ENCODE measurements at regions of chr6 and their contacts with region 1.

Region 1: DNA sequence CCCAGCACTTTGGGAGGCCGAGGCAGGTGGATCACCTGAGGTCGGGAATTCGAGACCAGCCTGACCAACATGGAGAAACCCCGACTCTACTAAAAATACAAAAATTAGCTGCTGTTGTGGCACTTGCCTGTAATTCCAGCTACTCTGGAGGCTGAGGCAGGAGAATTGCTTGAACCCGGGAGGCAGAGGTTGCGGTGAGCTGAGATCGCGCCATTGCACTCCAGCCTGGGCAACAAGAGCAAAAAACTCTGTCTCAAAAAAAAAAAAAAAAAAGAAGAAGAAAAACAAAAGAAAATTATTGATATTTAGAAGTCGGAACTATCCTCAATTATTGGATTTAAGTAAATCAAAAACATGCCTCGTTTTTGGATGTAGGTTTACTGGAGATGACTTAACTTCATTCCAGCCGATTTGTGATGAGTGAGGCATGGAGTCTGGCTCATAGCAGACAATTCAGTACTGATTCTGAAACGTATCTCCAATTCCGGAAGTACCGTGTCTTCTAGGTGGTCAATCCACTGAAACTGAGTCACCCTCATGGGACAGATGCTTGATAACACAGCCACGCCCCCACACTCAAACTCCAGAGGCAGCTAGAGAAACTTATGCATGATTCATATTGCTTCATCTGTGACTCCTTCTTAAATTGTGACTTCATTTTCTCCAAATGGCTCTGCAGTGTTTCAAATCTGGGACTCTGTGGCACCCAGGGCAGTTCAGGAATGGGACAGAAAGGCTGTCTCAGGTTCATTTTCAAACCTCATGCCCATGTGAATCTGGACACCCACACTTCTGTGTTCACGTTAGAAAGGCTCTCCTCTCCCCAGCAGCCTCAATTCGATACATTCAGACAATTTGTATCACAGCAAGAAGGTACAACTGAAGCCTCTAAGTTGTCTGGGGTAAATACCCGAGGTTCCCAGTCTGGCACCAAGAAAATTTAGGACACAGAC is 110.4 kb upstream of the ARMC2 start:
- DNase-seq: peak; percentile 90
- ATAC-seq: peak; percentile 31
- H3K4me3 ChIP-seq: no peak overlapping the region; the same call in 1 of the 2 replicates
- H3K27ac ChIP-seq: peak overlapping the region; percentile 86
- H3K4me1 ChIP-seq: peaks cover 79% of the 10 kb centered on the region
- H3K27me3 ChIP-seq: no peaks in the 10 kb centered on the region
- CTCF ChIP-seq: no peak

Region 2: DNA sequence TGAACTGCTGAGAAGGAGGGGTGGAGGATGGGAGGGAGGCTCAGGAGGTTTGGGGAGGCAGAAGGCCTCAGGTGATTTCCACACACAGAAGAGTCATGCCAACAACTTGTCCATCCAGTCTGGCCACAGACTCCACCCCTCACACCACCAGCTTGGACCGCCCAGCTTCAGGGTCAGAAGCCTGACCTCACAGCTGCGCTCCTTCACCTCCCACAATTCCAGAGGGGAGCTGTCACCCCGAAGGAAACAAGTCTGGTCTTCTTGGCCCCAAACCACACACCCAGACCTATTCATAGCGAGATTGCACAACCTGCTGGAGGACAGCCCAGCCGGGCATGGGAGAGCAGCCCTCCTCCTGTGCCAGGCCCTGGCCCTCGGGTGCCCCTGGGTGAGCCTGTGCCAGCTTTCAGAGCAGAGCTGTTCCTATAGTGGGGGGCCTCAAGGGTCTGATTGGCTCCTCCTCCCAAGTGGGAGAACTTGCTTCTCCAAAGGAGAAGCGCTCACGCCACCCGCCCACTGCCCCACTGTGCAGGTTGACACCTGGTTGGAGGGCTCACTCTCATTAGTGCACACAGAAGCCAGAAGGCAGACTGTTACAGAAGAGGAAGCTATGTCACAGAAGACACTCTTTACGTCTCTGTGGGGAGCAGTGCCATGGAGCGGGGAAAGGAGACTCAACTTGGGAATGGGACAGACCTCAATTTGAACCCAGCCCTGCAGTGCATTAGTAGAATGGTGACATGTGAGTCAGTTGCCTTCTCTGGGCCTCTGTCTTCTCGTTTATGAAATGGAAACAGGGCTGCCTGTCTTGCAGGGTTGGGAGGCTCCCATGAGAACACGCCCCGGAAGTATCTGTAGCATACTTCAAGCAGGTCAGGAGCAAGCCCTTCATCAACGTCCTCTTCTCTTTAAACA is 48.4 kb before region 1 on chr6:
- CTCF ChIA-PET with region 1: no interaction called
- POLR2A ChIA-PET with region 1: no interaction called
- intact Hi-C with region 1: loop called (anchors 5 kb)
- DNase-seq: peak; percentile 92
- ATAC-seq: peak; percentile 63
- H3K4me3 ChIP-seq: no peak overlapping the region
- H3K27ac ChIP-seq: peak overlapping the region; percentile 76
- H3K4me1 ChIP-seq: peaks cover 56% of the 10 kb centered on the region
- H3K27me3 ChIP-seq: no peaks in the 10 kb centered on the region
- CTCF ChIP-seq: no peak